ENCODE measurements at regions of chr14 and their contacts with region 1.

Region 1: GRCh38 chr14:73825551-73826188 is 26.0 kb upstream of the PTGR2 start:
- DNase-seq: peak; percentile 87
- H3K4me3 Mint-ChIP-seq: no peak overlapping the region
- H3K27ac Mint-ChIP-seq: no peak overlapping the region
- H3K4me1 Mint-ChIP-seq: peaks cover 15% of the 10 kb centered on the region
- H3K27me3 Mint-ChIP-seq: no peaks in the 10 kb centered on the region

Region 2: GRCh38 chr14:73696466-73697400 is 128.9 kb before region 1 on chr14:
- CTCF ChIA-PET with region 1: no interaction called
- POLR2A ChIA-PET with region 1: no interaction called
- intact Hi-C with region 1: loop called (anchors 1 kb)
- DNase-seq: no peak
- H3K4me3 Mint-ChIP-seq: peak overlapping the region; percentile 55
- H3K27ac Mint-ChIP-seq: peak overlapping the region; percentile 86
- H3K4me1 Mint-ChIP-seq: peaks cover 38% of the 10 kb centered on the region
- H3K27me3 Mint-ChIP-seq: no peaks in the 10 kb centered on the region

Region 3: GRCh38 chr14:73741386-73741875 is 84.2 kb before region 1 on chr14:
- CTCF ChIA-PET with region 1: interaction called, 9 read pairs
- POLR2A ChIA-PET with region 1: no interaction called
- intact Hi-C with region 1: loop called (anchors 5 kb)
- DNase-seq: peak; percentile 85
- H3K4me3 Mint-ChIP-seq: peak overlapping the region; percentile 43
- H3K27ac Mint-ChIP-seq: peak overlapping the region; percentile 89
- H3K4me1 Mint-ChIP-seq: peaks cover 64% of the 10 kb centered on the region
- H3K27me3 Mint-ChIP-seq: no peaks in the 10 kb centered on the region

Region 4: DNA sequence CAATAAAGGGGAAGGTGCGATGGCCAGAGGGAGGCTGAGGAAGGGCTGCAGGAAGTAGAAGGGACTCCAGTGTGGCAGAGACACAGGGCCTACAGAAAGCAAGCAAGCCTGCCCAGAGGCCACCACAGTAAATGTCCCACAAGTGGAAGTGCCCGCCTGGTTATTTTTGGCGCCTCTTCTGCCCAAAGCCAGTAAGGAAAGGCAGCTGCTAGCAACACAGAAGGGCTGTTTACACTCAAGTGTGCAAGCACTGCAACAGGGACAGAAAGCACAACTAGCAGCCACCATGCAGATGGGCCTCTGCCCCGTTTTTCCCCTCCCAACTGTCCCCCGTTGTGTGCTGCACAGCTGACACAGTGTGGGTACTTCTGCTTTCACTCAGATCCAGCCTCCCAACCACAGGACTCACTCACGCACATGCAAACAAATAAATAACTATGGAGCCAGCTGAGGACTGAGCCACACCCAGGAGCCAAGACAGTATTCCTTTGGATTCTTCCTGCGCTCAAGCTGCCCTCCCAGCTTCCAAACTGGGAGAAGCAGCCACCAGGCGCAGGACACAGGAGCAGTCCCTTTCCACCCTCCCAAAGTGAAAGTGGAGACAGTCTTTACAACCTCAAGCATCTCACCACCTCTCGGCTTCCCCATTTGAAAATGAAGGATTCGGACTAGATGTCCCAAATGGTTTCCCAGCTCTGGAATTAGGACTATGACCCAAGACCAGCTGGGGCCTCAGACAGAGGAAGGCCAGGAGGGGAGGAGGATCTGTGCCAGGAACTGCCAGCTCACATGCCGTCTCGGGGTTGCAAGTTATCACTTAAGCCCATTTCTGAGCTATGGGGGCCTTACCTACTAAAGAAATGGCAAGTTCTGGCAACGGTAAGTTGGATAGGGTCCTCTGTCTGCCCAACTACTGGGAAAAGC is 71.4 kb before region 1 on chr14:
- CTCF ChIA-PET with region 1: interaction called, 29 read pairs
- POLR2A ChIA-PET with region 1: interaction called, 4 read pairs
- intact Hi-C with region 1: no loop called
- DNase-seq: peak; percentile 84
- H3K4me3 Mint-ChIP-seq: peak overlapping the region; percentile 87
- H3K27ac Mint-ChIP-seq: peak overlapping the region; percentile 95
- H3K4me1 Mint-ChIP-seq: peaks cover 86% of the 10 kb centered on the region
- H3K27me3 Mint-ChIP-seq: no peaks in the 10 kb centered on the region

Region 5: DNA sequence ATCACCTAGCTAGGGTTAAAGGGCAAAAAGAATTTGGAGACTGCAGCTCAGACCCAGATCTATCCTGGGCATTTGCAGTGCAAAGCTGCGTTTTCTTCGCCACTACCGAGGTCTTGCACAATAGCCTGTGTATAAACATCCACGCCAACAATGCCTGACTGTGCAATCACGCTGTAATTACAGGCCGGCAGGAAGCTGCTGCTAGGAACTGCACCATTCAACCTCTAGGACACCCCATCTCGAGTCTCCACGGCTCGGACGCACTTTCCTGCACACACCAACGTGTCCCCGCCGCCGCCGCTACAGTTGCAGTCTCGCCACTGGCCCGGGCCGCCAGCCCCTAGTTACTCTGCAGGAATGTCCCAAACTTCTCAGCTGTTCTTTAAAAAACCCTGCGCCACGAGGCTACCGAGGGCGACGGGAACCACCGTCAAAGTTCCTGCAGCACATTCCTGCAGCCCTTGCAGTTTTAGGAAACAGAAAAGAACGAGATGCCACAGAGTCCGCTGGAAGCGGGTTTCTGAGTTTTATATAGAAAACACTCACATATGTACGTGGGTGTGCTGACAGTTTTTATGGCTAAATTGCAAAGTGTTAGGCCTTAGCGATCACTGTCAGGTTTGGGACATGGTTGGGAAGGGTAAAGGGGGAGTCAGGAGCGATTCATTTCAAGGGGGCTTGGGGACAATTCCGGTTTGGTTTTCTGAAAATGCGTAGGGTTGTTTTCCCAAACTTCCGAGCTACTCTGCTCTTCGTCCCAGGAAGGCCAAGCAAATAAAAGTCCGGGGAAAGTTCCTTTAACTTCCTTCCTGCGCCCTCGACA is 39.6 kb before region 1 on chr14:
- CTCF ChIA-PET with region 1: interaction called, 18 read pairs
- POLR2A ChIA-PET with region 1: interaction called, 6 read pairs
- intact Hi-C with region 1: loop called (anchors 1 kb)
- DNase-seq: peak; percentile 80
- H3K4me3 Mint-ChIP-seq: peak overlapping the region; percentile 90
- H3K27ac Mint-ChIP-seq: peak overlapping the region; percentile 93
- H3K4me1 Mint-ChIP-seq: peaks cover 56% of the 10 kb centered on the region
- H3K27me3 Mint-ChIP-seq: no peaks in the 10 kb centered on the region

Region 6: GRCh38 chr14:73886449-73887317 is 61.0 kb after region 1 on chr14 and contains the start of gene ZNF410:
- CTCF ChIA-PET with region 1: interaction called, 3 read pairs
- POLR2A ChIA-PET with region 1: no interaction called
- intact Hi-C with region 1: loop called (anchors 2 kb)
- DNase-seq: peak; percentile 97
- H3K4me3 Mint-ChIP-seq: peak within 1 kb of the TSS; percentile 93
- H3K27ac Mint-ChIP-seq: peak within 1 kb of the TSS; percentile 95
- H3K4me1 Mint-ChIP-seq: peaks cover 47% of the 10 kb centered on the region
- H3K27me3 Mint-ChIP-seq: no peaks in the 10 kb centered on the region
- total RNA-seq, gene ZNF410: 65.2 to 68.7 TPM